ENCODE measurements at regions of chr4 and their contacts with region 1.

Region 1: DNA sequence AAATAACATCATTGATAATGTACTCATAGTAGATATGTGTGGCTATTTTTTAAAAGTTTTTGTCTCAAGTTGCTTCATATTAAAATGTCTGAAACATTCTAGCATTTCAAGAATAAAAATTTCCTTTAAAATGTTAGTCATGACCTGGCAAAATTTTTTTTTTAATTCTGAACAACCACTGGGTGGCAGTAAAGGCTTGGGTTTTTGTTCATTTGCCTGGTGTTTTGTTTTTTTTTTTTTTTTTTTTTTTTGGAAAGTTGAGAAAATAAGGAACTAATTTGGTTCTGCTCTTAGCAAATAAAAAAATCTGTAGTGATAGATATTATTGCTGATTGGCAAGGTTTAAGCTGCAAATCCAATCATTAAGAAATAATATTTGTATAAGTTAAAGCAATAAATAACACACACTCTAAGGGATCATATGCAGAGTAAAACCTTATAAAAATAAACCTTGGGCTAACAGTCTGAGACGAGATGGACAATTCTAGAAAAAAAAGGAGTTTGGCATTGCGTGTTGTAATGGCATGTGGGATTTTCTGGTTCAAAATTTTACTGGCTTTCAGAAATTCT is 81.4 kb downstream of the CEP44 start:
- DNase-seq: no peak
- CTCF ChIP-seq: peak; percentile 44

Region 2: DNA sequence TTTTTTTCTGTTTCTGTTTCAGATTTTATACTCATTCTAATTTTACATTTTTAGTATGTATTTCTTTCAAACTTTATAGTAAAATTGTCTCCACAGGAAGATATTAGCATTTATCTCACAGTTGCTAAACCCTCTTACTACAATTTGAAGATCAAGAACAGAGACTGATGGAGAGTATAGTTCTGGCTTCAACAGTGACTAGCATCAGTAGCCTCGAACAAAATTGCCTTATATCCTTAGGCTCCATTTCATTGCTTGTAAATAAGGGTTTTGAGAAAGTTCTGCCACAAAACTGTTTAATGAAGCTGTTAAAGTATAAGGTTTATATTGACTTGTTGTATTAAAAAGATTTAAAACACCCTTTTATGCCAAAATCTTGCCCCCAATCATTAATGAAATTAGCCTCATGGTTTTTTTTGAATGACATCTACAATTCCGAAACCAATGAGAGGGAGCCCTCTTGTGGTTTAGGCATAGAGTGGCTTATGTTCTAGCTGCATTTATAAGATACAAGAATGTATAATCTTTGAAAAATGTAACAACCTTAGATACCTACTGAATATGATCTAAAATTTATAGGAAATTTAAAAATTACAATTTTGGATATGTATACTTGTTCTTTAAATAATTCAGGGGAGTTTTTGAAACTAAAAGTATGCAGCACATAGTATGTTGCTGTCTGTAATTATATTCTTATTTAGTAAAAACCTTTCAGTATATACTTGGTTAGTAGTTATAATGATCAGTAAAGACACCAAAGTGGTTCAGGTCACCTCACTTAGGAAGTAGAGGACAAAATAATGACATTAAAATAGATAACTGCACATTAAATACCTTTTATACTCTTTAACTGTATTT is 267.0 kb after region 1 on chr4:
- in situ Hi-C with region 1: loop called (anchors 25 kb)
- DNase-seq: peak; percentile 23
- CTCF ChIP-seq: peak; percentile 70

Region 3: DNA sequence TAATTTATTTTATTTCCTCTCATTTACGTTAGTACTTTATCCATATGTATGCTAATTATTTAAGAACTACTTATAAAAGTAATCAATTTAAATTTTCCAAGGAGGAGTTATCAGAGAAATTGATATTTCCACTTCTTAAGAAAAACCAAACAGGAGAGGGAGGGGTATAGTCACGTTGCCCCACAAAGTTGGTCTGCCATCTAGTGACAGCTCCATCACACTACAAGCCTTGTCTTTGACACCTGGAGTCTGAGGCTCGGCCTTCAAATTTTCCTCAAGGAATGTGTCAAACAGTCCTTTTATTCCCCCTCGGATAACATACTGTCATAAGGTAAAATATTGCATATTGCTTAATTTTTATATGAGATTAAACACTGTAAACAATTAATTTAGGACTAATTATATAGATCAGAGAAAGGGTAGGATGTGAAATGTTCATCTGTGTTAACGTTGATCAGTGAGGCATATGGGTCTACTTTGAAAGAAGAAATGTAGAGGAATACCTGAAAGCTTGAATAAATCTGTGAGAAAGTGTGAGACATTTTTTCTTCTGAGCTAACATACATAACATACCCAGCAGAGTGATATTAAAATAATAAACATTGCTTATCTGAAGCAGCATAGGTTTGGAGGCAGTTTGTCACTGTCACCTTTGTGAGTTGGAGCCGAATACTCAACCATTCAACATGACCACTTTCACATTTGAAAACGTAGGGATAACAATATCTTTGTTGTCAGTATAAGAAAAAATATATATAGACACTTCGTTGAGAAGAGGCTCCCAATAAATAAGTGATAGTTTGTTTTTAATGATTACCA is 349.5 kb after region 1 on chr4:
- in situ Hi-C with region 1: loop called (anchors 25 kb)
- DNase-seq: peak; percentile 60
- CTCF ChIP-seq: peak; percentile 74